PC-9 (cell line): ENCODE measurements at regions of chr1 and their contacts with region 1.

Region 1: GRCh38 chr1:84620720-84621313 is 46.6 kb upstream of the CTBS start:
- DNase-seq: peak; percentile 56 to 86
- H3K4me3 ChIP-seq: peak overlapping the region; percentile 75
- H3K27ac ChIP-seq: peak overlapping the region; percentile 29
- H3K4me1 ChIP-seq: peaks cover 10% of the 10 kb centered on the region
- H3K27me3 ChIP-seq: no peaks in the 10 kb centered on the region
- CTCF ChIP-seq: peak; percentile 97

Region 2: GRCh38 chr1:84450910-84451309 is 169.9 kb before region 1 on chr1:
- CTCF ChIA-PET with region 1: interaction called, 10 read pairs
- POLR2A ChIA-PET with region 1: no interaction called
- intact Hi-C with region 1: no loop called
- DNase-seq: no peak
- H3K4me3 ChIP-seq: no peak overlapping the region
- H3K27ac ChIP-seq: no peak overlapping the region
- H3K4me1 ChIP-seq: no peaks in the 10 kb centered on the region
- H3K27me3 ChIP-seq: no peaks in the 10 kb centered on the region
- CTCF ChIP-seq: no peak